CD4-positive, alpha-beta memory T cell (primary cell): ENCODE measurements at regions of chr10 and their contacts with region 1.

Region 1: DNA sequence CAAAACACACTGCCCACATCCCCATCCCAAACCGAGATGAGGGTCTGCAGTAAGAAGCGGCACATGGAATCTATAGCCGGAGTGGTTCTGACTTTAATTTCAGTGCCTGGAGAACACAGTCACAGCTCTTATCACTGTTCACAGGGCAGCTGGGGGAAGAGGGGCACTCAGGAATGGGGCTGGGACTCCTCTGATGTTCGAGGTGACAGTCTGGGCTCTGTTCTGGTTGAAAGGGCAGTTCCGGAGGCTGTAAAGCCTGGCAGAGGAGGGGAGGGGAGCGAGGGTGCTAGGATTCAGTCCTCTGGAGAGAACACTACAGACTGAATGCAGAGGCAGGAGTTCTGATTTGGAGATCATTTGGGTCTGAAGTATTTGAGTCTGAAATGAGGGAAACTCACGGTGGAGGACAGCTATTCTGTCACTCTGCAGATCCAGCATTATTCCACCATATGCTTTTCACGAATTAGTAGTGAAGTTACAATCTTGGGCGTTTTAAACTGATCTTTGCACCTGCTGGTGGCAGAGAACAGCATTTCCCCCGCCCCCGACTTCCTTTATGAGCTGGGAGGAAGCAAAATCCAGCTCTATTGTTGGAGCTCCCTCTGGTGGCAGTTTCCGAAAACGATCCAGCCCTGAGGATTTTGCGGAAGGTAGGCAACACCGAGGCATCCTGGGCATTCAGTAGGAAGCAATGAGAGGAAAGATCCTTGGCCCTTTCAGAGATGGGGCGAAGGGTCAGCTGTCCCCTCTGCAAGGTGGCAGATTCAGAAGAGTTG is 22.7 kb upstream of the KCNK18 start:
- DNase-seq: peak; percentile 78 to 82 (median 81)
- H3K4me3 ChIP-seq: peak overlapping the region; percentile 49 to 61
- H3K4me3 Mint-ChIP-seq: peak overlapping the region; percentile 89 to 98 (median 94)
- H3K27ac ChIP-seq: no peak overlapping the region
- H3K27ac Mint-ChIP-seq: peak overlapping the region in 6 of 7 donors; percentile 31 to 85 (median 65)
- H3K4me1 ChIP-seq: peaks cover 7% of the 10 kb centered on the region
- H3K4me1 Mint-ChIP-seq: peaks cover 9 to 22% (median 14%) of the 10 kb centered on the region in 4 donors
- H3K27me3 ChIP-seq: peaks cover 14% of the 10 kb centered on the region
- H3K27me3 Mint-ChIP-seq: peaks cover 29 to 33% of the 10 kb centered on the region in 2 donors

Region 2: GRCh38 chr10:116688241-116688711 is 486.4 kb before region 1 on chr10:
- CTCF ChIA-PET with region 1: interaction called, 20 read pairs
- POLR2A ChIA-PET with region 1: no interaction called
- intact Hi-C with region 1: no loop called
- DNase-seq: no peak
- H3K4me3 ChIP-seq: no peak overlapping the region
- H3K4me3 Mint-ChIP-seq: no peak overlapping the region
- H3K27ac ChIP-seq: no peak overlapping the region
- H3K27ac Mint-ChIP-seq: peak overlapping the region in 1 of 7 donors; percentile 77
- H3K4me1 ChIP-seq: no peaks in the 10 kb centered on the region
- H3K4me1 Mint-ChIP-seq: no peaks in the 10 kb centered on the region
- H3K27me3 ChIP-seq: no peaks in the 10 kb centered on the region
- H3K27me3 Mint-ChIP-seq: peaks cover 5 to 25% of the 10 kb centered on the region in 2 donors

Region 3: GRCh38 chr10:116796910-116797513 is 377.6 kb before region 1 on chr10:
- CTCF ChIA-PET with region 1: interaction called, 196 read pairs
- POLR2A ChIA-PET with region 1: no interaction called
- intact Hi-C with region 1: loop called (anchors 1 kb)
- DNase-seq: peak; percentile 52 to 59 (median 54)
- H3K4me3 ChIP-seq: no peak overlapping the region
- H3K4me3 Mint-ChIP-seq: no peak overlapping the region
- H3K27ac ChIP-seq: no peak overlapping the region
- H3K27ac Mint-ChIP-seq: peak overlapping the region in 1 of 7 donors; percentile 79
- H3K4me1 ChIP-seq: no peaks in the 10 kb centered on the region
- H3K4me1 Mint-ChIP-seq: no peaks in the 10 kb centered on the region
- H3K27me3 ChIP-seq: no peaks in the 10 kb centered on the region
- H3K27me3 Mint-ChIP-seq: peaks cover 10 to 21% of the 10 kb centered on the region in 2 donors

Region 4: DNA sequence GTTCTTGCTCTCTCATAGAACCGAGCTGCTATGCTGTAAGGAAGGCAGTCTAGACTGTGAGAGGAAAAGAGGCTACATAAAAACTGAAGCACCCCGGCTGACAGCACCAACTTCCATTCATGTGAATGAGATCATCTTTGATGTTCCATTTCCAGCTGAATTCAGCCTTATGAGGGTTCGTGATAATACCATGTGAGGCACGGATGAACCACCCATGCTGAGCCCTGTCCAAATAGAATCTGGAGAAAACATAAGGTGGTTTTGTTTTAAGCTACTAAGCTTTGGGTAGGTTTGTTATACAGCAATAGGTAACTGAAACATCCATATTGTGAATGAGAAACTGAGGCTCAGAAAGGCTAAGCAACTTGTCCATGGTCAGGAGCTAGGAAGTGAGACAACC is 29.6 kb before region 1 on chr10:
- CTCF ChIA-PET with region 1: interaction called, 10 read pairs
- POLR2A ChIA-PET with region 1: no interaction called
- intact Hi-C with region 1: no loop called
- DNase-seq: no peak
- H3K4me3 ChIP-seq: no peak overlapping the region
- H3K4me3 Mint-ChIP-seq: no peak overlapping the region
- H3K27ac ChIP-seq: no peak overlapping the region
- H3K27ac Mint-ChIP-seq: no peak overlapping the region
- H3K4me1 ChIP-seq: no peaks in the 10 kb centered on the region
- H3K4me1 Mint-ChIP-seq: peaks cover 0 to 1% (median 0%) of the 10 kb centered on the region in 4 donors
- H3K27me3 ChIP-seq: peaks cover 5% of the 10 kb centered on the region
- H3K27me3 Mint-ChIP-seq: peaks cover 34 to 46% of the 10 kb centered on the region in 2 donors

Region 5: GRCh38 chr10:117186832-117187615 is 12.4 kb after region 1 on chr10:
- CTCF ChIA-PET with region 1: interaction called, 26 read pairs
- POLR2A ChIA-PET with region 1: no interaction called
- intact Hi-C with region 1: no loop called
- DNase-seq: no peak
- H3K4me3 ChIP-seq: no peak overlapping the region
- H3K4me3 Mint-ChIP-seq: no peak overlapping the region
- H3K27ac ChIP-seq: no peak overlapping the region
- H3K27ac Mint-ChIP-seq: no peak overlapping the region
- H3K4me1 ChIP-seq: no peaks in the 10 kb centered on the region
- H3K4me1 Mint-ChIP-seq: no peaks in the 10 kb centered on the region
- H3K27me3 ChIP-seq: no peaks in the 10 kb centered on the region
- H3K27me3 Mint-ChIP-seq: peaks cover 2 to 7% of the 10 kb centered on the region in 2 donors

Region 6: GRCh38 chr10:117960345-117960935 is 785.8 kb after region 1 on chr10:
- CTCF ChIA-PET with region 1: no interaction called
- POLR2A ChIA-PET with region 1: no interaction called
- intact Hi-C with region 1: no loop called
- DNase-seq: no peak
- H3K4me3 ChIP-seq: no peak overlapping the region
- H3K4me3 Mint-ChIP-seq: no peak overlapping the region
- H3K27ac ChIP-seq: no peak overlapping the region
- H3K27ac Mint-ChIP-seq: no peak overlapping the region
- H3K4me1 ChIP-seq: no peaks in the 10 kb centered on the region
- H3K4me1 Mint-ChIP-seq: no peaks in the 10 kb centered on the region
- H3K27me3 ChIP-seq: no peaks in the 10 kb centered on the region
- H3K27me3 Mint-ChIP-seq: peaks cover 3 to 6% of the 10 kb centered on the region in 2 donors